ENCODE measurements at regions of chr16 and their contacts with region 1.

Region 1: GRCh38 chr16:23556881-23557778 is at the starts of genes EARS2 and UBFD1:
- DNase-seq: peak; percentile 95
- ATAC-seq: peak; percentile 94
- H3K4me3 ChIP-seq: peak within 1 kb of the TSS; percentile 92
- H3K27ac ChIP-seq: peak within 1 kb of the TSS; percentile 95
- H3K4me1 ChIP-seq: no peaks in the 10 kb centered on the region; the same call in none of the 2 replicates
- H3K27me3 ChIP-seq: no peaks in the 10 kb centered on the region
- CTCF ChIP-seq: peak; percentile 95 to 97 (median 96); a peak in 5 of 6 replicates
- EP300 ChIP-seq: no peak; a peak in 1 of 4 replicates
- POLR2A ChIP-seq: peak; percentile 91
- RAD21 ChIP-seq: peak; percentile 51; the same call in 1 of the 2 replicates
- polyA plus RNA-seq, gene EARS2: 12.9 to 27.0 TPM
- polyA plus RNA-seq, gene UBFD1: 7.3 to 7.9 TPM

Region 2: DNA sequence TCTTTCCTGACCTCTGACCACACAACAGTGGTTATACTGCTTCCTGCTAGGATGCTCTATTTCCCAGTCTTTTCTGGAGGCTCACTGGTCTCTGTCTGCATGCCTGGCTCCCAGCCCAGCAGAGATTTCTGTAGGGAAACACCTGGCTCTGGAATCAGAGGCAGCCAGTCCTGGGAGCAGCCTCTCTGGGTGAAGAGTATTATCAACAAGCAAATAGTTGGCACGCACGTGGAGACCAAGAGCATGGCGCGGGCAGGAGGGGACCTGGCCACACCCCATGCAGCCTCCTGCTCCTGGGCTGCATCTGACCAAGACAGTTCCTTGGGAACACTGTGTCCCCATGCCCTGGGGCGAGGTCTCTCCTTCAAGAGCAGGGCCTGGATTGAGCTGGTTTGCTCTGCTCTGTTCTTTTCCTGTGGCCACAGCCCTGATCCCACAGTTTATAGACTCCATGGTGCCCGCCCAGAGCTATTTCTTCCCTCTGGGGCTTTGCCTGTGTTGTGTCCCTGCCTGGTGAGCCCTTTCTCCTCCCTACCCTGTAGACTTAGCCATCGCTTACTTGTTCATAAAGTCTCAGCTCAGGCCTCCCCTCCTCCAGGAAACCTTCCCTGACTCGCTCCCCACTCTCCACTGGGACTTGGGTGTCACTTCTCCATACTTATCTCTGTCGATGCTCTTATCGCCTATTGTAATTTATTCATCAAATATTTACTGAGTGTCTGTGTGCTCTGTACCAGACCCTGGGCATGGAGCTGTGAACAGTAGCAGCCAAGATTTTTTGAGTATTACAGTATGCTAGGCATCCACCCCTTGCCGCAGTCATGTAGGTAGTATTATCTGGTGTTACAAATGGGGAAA is 194.4 kb before region 1 on chr16:
- CTCF ChIA-PET with region 1: no interaction called
- POLR2A ChIA-PET with region 1: no interaction called
- RAD21 ChIA-PET with region 1: no interaction called
- SMC1A ChIA-PET with region 1: no interaction called
- in situ Hi-C with region 1: no loop called
- intact Hi-C with region 1: no loop called
- DNase-seq: no peak
- ATAC-seq: no peak
- H3K4me3 ChIP-seq: no peak overlapping the region
- H3K27ac ChIP-seq: no peak overlapping the region
- H3K4me1 ChIP-seq: peaks cover 5% of the 10 kb centered on the region
- H3K27me3 ChIP-seq: no peaks in the 10 kb centered on the region
- CTCF ChIP-seq: no peak
- EP300 ChIP-seq: no peak
- POLR2A ChIP-seq: no peak
- RAD21 ChIP-seq: no peak

Region 3: GRCh38 chr16:23466066-23466885 is 90.9 kb before region 1 on chr16:
- CTCF ChIA-PET with region 1: interaction called, 3 read pairs
- POLR2A ChIA-PET with region 1: no interaction called
- RAD21 ChIA-PET with region 1: no interaction called
- SMC1A ChIA-PET with region 1: no interaction called
- in situ Hi-C with region 1: no loop called
- intact Hi-C with region 1: loop called (anchors 10 kb)
- DNase-seq: no peak
- ATAC-seq: no peak
- H3K4me3 ChIP-seq: no peak overlapping the region
- H3K27ac ChIP-seq: no peak overlapping the region
- H3K4me1 ChIP-seq: no peaks in the 10 kb centered on the region
- H3K27me3 ChIP-seq: no peaks in the 10 kb centered on the region
- CTCF ChIP-seq: no peak
- EP300 ChIP-seq: no peak
- POLR2A ChIP-seq: no peak
- RAD21 ChIP-seq: no peak

Region 4: DNA sequence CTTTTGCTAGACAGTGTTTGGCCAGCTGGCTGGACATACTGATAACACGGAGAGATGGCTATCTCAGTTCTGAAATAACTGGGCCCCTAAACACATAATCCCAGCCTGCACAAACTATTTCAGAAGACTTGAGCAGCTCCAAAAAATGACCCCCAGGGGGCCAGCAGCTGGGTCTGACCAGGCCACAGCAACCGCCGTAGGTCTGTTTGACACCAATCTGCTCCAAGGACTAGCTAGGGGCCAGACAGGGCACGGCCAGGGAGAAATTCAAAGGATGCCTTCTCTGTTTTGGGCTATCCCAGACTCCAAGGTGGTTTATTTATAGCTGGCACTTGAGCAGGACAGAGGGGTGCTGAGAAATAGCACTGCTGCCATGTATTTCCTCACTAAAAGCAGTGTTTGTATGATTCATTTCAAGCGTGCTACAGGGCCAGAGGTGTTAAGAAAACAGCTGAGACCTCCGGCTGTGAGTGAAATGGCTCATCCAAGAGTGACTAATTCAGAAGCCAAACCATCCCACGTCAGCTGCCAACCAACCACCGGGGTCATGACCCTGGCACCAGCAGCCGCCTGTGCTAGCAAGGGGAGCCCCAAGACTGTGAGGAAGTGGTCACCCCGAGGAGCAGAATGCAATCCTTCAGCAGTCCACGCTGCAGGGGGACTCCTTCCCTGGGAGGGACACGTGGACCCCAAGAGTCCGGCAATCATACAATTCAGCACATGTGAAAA is 52.5 kb before region 1 on chr16:
- CTCF ChIA-PET with region 1: interaction called, 35 read pairs
- POLR2A ChIA-PET with region 1: interaction called, 4 read pairs
- RAD21 ChIA-PET with region 1: interaction called, 15 read pairs
- SMC1A ChIA-PET with region 1: interaction called, 10 read pairs
- in situ Hi-C with region 1: no loop called
- intact Hi-C with region 1: loop called (anchors 2 kb)
- DNase-seq: peak; percentile 77
- ATAC-seq: peak; percentile 76
- H3K4me3 ChIP-seq: peak overlapping the region; percentile 68
- H3K27ac ChIP-seq: peak overlapping the region; percentile 86
- H3K4me1 ChIP-seq: peaks cover 48% of the 10 kb centered on the region
- H3K27me3 ChIP-seq: no peaks in the 10 kb centered on the region
- CTCF ChIP-seq: 0 out of 6 replicates have a peak, but pooled peaks of 1 of the 3 experiments have one; percentile 23
- EP300 ChIP-seq: peak; percentile 73 to 86; a peak in 3 of 4 replicates
- POLR2A ChIP-seq: peak; percentile 31; the same call in 1 of the 2 replicates
- RAD21 ChIP-seq: no peak

Region 5: DNA sequence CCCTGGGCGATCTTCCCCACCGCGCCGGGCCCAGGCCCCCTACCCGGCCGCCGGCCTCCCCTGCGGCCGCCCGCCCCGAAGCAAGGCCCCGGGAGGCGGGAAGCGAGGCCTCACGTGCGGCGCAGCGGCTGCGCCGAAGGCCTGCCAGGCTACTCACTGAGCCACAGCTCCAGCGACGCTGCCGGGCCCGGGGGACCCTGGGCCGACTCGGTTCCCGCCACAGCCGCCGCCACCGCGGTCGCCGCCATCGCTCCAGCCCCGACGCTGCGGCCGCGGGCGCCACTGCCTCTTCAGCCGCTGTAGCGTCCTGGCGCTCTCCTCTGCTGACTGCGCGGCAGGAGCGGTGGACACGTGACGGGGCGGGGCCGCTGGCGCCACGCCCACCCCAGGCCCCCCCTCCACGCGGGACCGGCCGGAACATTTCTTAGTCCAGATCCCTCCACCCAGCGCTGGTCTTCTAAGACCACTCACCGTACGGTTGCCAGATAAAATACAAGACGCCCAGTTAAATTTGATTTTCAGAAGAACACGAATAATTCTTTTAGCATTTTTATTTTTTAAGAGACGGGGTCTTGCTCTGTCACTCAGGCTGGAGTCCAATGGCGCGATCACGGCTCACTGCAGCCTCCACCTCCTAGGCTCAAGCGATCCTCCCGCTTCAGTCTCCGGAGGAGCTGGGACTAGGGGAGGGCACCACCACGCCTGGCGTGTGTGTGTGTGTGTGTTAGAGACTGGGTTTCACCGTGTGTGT is 46.8 kb before region 1 on chr16 and contains the start of gene GGA2:
- CTCF ChIA-PET with region 1: interaction called, 35 read pairs
- POLR2A ChIA-PET with region 1: interaction called, 4 read pairs
- RAD21 ChIA-PET with region 1: interaction called, 15 read pairs
- SMC1A ChIA-PET with region 1: interaction called, 10 read pairs
- in situ Hi-C with region 1: no loop called
- intact Hi-C with region 1: loop called (anchors 2 kb)
- DNase-seq: no peak
- ATAC-seq: peak; percentile 84
- H3K4me3 ChIP-seq: peak within 1 kb of the TSS; percentile 94
- H3K27ac ChIP-seq: peak within 1 kb of the TSS; percentile 76
- H3K4me1 ChIP-seq: peaks cover 16% of the 10 kb centered on the region
- H3K27me3 ChIP-seq: no peaks in the 10 kb centered on the region
- CTCF ChIP-seq: no peak
- EP300 ChIP-seq: no peak
- POLR2A ChIP-seq: peak; percentile 95
- RAD21 ChIP-seq: no peak
- polyA plus RNA-seq, gene GGA2: 14.1 to 21.5 TPM

Region 6: GRCh38 chr16:23595951-23596720 is 39.0 kb after region 1 on chr16 and contains the start of gene NDUFAB1:
- CTCF ChIA-PET with region 1: interaction called, 29 read pairs
- POLR2A ChIA-PET with region 1: no interaction called
- RAD21 ChIA-PET with region 1: interaction called, 13 read pairs
- SMC1A ChIA-PET with region 1: interaction called, 3 read pairs
- in situ Hi-C with region 1: no loop called
- intact Hi-C with region 1: loop called (anchors 1 kb)
- DNase-seq: peak; percentile 51
- ATAC-seq: peak; percentile 99
- H3K4me3 ChIP-seq: peak within 1 kb of the TSS; percentile 82
- H3K27ac ChIP-seq: peak within 1 kb of the TSS; percentile 77
- H3K4me1 ChIP-seq: peaks cover 16% of the 10 kb centered on the region
- H3K27me3 ChIP-seq: no peaks in the 10 kb centered on the region
- CTCF ChIP-seq: peak; percentile 93 to 99 (median 99)
- EP300 ChIP-seq: no peak
- POLR2A ChIP-seq: peak; percentile 89
- RAD21 ChIP-seq: no peak
- polyA plus RNA-seq, gene NDUFAB1: 99.8 to 226 TPM

Region 7: GRCh38 chr16:23615805-23616204 is 58.7 kb after region 1 on chr16:
- CTCF ChIA-PET with region 1: no interaction called
- POLR2A ChIA-PET with region 1: no interaction called
- RAD21 ChIA-PET with region 1: no interaction called
- SMC1A ChIA-PET with region 1: no interaction called
- in situ Hi-C with region 1: no loop called
- intact Hi-C with region 1: no loop called
- DNase-seq: no peak
- ATAC-seq: no peak
- H3K4me3 ChIP-seq: no peak overlapping the region
- H3K27ac ChIP-seq: no peak overlapping the region
- H3K4me1 ChIP-seq: no peaks in the 10 kb centered on the region
- H3K27me3 ChIP-seq: no peaks in the 10 kb centered on the region
- CTCF ChIP-seq: no peak
- EP300 ChIP-seq: no peak
- POLR2A ChIP-seq: no peak
- RAD21 ChIP-seq: no peak

Region 8: GRCh38 chr16:23640931-23641765 is 84.0 kb after region 1 on chr16 and contains the starts of genes DCTN5 and PALB2:
- CTCF ChIA-PET with region 1: no interaction called
- POLR2A ChIA-PET with region 1: no interaction called
- RAD21 ChIA-PET with region 1: no interaction called
- SMC1A ChIA-PET with region 1: no interaction called
- in situ Hi-C with region 1: no loop called
- intact Hi-C with region 1: loop called (anchors 1 kb)
- DNase-seq: peak; percentile 83
- ATAC-seq: peak; percentile 96
- H3K4me3 ChIP-seq: peak within 1 kb of the TSS; percentile 92
- H3K27ac ChIP-seq: peak within 1 kb of the TSS; percentile 84
- H3K4me1 ChIP-seq: peaks cover 3% of the 10 kb centered on the region; the same call in 1 of the 2 replicates
- H3K27me3 ChIP-seq: no peaks in the 10 kb centered on the region
- CTCF ChIP-seq: no peak
- EP300 ChIP-seq: no peak
- POLR2A ChIP-seq: peak; percentile 85
- RAD21 ChIP-seq: no peak
- polyA plus RNA-seq, gene DCTN5: 69.2 to 72.5 TPM
- polyA plus RNA-seq, gene PALB2: 9.2 to 15.1 TPM

Region 9: GRCh38 chr16:23729503-23730424 is 172.6 kb after region 1 on chr16:
- CTCF ChIA-PET with region 1: no interaction called
- POLR2A ChIA-PET with region 1: no interaction called
- RAD21 ChIA-PET with region 1: interaction called, 3 read pairs
- SMC1A ChIA-PET with region 1: interaction called, 5 read pairs
- in situ Hi-C with region 1: no loop called
- intact Hi-C with region 1: loop called (anchors 5 kb)
- DNase-seq: no peak
- ATAC-seq: no peak
- H3K4me3 ChIP-seq: no peak overlapping the region
- H3K27ac ChIP-seq: no peak overlapping the region
- H3K4me1 ChIP-seq: peaks cover 4% of the 10 kb centered on the region; the same call in 1 of the 2 replicates
- H3K27me3 ChIP-seq: no peaks in the 10 kb centered on the region
- CTCF ChIP-seq: no peak
- EP300 ChIP-seq: no peak
- POLR2A ChIP-seq: no peak
- RAD21 ChIP-seq: no peak

Measured in GM12878 (cell line).